H1 (cell line): ENCODE measurements at regions of chr10 and their contacts with region 1.

Region 1: DNA sequence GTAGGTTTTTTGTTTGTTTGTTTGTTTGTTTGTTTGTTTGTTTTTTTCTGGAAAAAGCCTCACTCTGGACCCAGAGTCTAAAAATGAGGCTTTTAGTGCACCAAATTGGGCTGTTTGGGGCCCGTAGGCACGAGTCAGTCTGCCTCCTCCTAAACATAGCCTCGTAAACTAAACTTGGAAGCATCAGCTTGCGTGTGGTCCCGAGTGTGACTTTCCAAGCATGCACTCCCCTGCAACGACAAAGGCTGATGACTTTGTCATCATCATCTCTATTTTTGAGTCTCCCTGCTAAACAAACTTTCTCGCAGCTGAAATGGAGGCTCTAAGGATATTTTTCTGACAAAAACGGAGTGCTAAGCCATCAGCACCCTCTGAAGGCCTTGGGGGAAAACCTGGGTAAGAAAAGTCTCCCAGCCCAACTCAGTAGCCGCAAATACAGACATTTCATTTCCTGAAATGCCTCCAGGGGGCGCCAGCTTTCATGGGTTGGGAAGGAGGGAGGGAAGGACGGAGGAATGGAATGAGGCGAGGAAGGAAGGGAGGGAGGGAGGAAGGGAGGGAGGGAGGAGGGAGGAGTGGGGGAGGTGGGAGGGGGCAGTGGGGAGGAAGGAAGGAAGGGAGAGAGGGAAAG is 245.9 kb downstream of the KCNMA1 start:
- DNase-seq: peak; percentile 62 to 97
- H3K4me3 ChIP-seq: no peak overlapping the region
- H3K27ac ChIP-seq: no peak overlapping the region
- H3K4me1 ChIP-seq: peaks cover 0 to 8% (median 5%) of the 10 kb centered on the region in 4 experiments; a peak in 4 of 7 replicates
- H3K27me3 ChIP-seq: no peaks in the 10 kb centered on the region
- CTCF ChIP-seq: peak; percentile 68 to 82 (median 70)
- EP300 ChIP-seq: no peak
- POLR2A ChIP-seq: no peak
- RAD21 ChIP-seq: peak; percentile 71 to 83

Region 2: GRCh38 chr10:77377678-77378352 is 13.9 kb before region 1 on chr10:
- CTCF ChIA-PET with region 1: interaction called, 10 read pairs
- POLR2A ChIA-PET with region 1: no interaction called
- DNase-seq: no peak
- H3K4me3 ChIP-seq: no peak overlapping the region
- H3K27ac ChIP-seq: no peak overlapping the region
- H3K4me1 ChIP-seq: no peaks in the 10 kb centered on the region
- H3K27me3 ChIP-seq: no peaks in the 10 kb centered on the region
- CTCF ChIP-seq: peak; percentile 42 to 56 (median 44)
- EP300 ChIP-seq: no peak
- POLR2A ChIP-seq: no peak
- RAD21 ChIP-seq: peak; percentile 81 to 85

Region 3: GRCh38 chr10:77405771-77406241 is 14.1 kb after region 1 on chr10:
- CTCF ChIA-PET with region 1: interaction called, 33 read pairs
- POLR2A ChIA-PET with region 1: interaction called, 7 read pairs
- DNase-seq: peak; percentile 59 to 77
- H3K4me3 ChIP-seq: no peak overlapping the region
- H3K27ac ChIP-seq: no peak overlapping the region
- H3K4me1 ChIP-seq: peaks cover 2 to 5% (median 4%) of the 10 kb centered on the region in 4 experiments; a peak in 4 of 7 replicates
- H3K27me3 ChIP-seq: no peaks in the 10 kb centered on the region
- CTCF ChIP-seq: no peak
- EP300 ChIP-seq: no peak
- POLR2A ChIP-seq: no peak
- RAD21 ChIP-seq: no peak

Region 4: GRCh38 chr10:77416311-77417135 is 24.8 kb after region 1 on chr10:
- CTCF ChIA-PET with region 1: interaction called, 38 read pairs
- POLR2A ChIA-PET with region 1: no interaction called
- DNase-seq: no peak
- H3K4me3 ChIP-seq: no peak overlapping the region
- H3K27ac ChIP-seq: no peak overlapping the region
- H3K4me1 ChIP-seq: no peaks in the 10 kb centered on the region
- H3K27me3 ChIP-seq: no peaks in the 10 kb centered on the region
- CTCF ChIP-seq: no peak
- EP300 ChIP-seq: no peak
- POLR2A ChIP-seq: no peak
- RAD21 ChIP-seq: no peak